ENCODE measurements at regions of chr6 and their contacts with region 1.

Region 1: DNA sequence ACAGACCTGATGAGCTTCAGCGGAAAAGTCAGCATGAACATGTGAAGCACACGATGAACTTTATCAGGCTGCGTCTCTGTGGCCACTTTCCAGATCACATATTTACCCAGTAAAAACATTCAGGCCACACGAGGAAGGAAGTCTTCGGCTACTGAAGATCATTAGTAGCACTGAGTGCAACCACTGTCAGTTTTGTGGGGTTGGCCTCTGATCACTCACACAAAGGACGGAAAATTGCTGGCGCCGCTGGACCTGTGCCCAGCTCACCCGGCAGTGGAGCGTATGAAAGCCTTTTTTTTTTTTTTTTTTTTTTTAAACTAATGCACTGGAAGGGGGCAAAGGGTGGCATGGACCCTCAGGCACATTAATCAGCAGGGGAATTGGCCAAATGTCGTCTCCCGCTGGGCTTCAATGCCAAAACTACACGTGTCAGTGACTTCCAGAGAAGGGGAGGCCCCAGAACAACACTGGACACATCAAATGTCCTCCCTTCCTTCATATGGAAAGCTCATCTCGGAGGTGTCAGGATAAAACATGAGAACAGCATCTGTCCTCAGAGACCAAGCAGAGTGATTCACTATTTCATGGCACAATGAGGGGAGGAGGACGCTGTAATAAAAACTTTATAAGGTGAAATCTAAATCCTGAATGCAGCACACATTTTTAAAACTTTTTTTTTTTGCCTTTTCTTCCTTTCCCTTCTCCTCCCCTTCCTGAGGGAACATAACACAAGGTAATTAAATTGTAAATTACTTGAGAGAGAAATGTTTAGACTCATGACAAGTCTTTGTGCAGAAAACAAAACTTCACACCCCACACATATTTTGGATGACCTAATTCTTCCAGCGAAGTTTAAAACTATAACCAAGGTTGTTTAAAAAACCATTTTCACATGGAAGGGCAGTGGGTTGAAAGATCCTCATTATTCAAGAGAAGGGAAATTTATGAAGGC is 223.4 kb downstream of the FOXC1 start:
- DNase-seq: peak; percentile 49 to 71 (median 60)
- ATAC-seq: peak; percentile 37 to 89 (median 78)
- H3K4me3 ChIP-seq: peak overlapping the region in 6 of 12 donors; percentile 12 to 33 (median 20)
- H3K27ac ChIP-seq: peak overlapping the region in 8 of 12 donors; percentile 2 to 34 (median 16)
- H3K4me1 ChIP-seq: peaks cover 0 to 25% (median 0%) of the 10 kb centered on the region in 12 donors
- H3K27me3 ChIP-seq: no peaks in the 10 kb centered on the region
- CTCF ChIP-seq: no peak
- POLR2A ChIP-seq: no peak

Region 2: DNA sequence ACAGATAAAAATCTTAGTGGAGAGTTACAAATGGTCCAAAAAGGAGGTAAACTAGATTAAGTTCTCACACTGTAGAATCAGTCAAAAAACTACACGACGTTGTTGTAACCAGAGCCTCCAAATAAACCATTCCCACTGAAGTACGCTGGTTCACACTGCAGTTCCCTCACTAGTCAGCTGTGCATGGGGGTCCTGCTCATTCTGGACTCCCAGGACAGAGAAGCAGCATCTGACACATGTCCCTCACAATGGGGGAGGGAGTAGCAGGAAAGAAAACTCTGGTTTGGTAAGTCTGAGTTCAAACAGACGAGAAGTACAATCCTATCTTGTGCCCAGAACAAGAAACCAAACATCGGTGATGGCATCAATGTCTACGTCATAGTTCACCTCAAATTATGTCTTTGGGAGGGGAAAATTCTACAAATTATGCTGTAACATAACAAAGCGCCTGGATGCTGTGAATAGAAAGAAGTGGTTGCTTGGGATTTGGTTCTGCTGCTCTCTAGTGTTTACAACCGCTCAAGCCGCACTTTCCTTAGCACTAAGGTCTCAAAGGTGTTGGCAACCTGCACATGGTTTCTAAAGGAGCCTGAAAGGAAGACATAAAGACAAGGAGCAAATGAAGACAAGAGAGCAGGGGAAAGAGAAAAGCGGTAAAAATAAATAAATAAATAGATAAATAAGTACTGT is 204.3 kb after region 1 on chr6:
- intact Hi-C with region 1: loop called in 1 of 10 experiments (anchors 10 kb)
- DNase-seq: no peak
- ATAC-seq: no peak
- H3K4me3 ChIP-seq: no peak overlapping the region
- H3K27ac ChIP-seq: no peak overlapping the region
- H3K4me1 ChIP-seq: no peaks in the 10 kb centered on the region
- H3K27me3 ChIP-seq: no peaks in the 10 kb centered on the region
- CTCF ChIP-seq: peak in 5 of 12 donors; percentile 9 to 23 (median 21)
- POLR2A ChIP-seq: no peak

Measured in heart left ventricle (tissue), 16 donors.